ENCODE measurements at regions of chr2 and their contacts with region 1.

Region 1: GRCh38 chr2:53896864-53897263 is 37.1 kb upstream of the GPR75 start:
- DNase-seq: no peak
- ATAC-seq: peak; percentile 64 to 86 (median 81)
- H3K4me3 ChIP-seq: no peak overlapping the region
- H3K27ac ChIP-seq: peak overlapping the region in 1 of 12 donors; percentile 39
- H3K4me1 ChIP-seq: peaks cover 0 to 10% (median 0%) of the 10 kb centered on the region in 12 donors
- H3K27me3 ChIP-seq: no peaks in the 10 kb centered on the region
- CTCF ChIP-seq: no peak
- POLR2A ChIP-seq: no peak

Region 2: GRCh38 chr2:53933329-53933728 is 36.5 kb after region 1 on chr2:
- intact Hi-C with region 1: loop called in 1 of 10 experiments (anchors 5 kb)
- DNase-seq: no peak
- ATAC-seq: no peak
- H3K4me3 ChIP-seq: no peak overlapping the region
- H3K27ac ChIP-seq: no peak overlapping the region
- H3K4me1 ChIP-seq: no peaks in the 10 kb centered on the region
- H3K27me3 ChIP-seq: no peaks in the 10 kb centered on the region
- CTCF ChIP-seq: no peak
- POLR2A ChIP-seq: no peak

Region 3: DNA sequence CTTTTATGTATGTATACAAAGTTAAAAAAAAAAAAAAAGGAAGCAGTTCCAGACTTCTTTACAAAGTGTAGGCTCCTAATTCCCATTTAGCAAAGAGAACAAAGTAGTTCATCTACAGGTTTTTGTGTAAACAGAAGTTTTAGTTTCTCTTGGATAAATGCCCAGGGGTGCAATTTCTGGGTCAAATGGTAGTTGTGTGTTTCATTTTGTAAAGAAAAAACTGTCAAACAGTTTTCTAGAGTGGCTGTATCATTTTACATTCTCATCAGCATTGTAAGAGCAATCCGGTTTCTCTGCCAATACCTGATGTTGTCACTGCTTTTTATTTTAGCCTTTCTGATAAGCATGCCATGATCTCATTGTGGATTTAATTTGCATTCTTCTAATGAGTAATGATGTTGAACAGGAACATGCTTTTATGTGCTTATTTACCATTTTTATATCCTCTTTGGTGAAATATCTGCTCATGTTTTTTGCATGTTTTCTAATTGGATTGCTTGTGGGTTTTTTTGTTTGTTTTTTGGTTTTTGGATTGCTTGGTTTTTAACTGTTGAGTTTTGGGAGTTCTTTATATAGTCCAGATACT is 90.6 kb after region 1 on chr2:
- intact Hi-C with region 1: no loop called
- DNase-seq: no peak
- ATAC-seq: peak in 3 of 4 donors; percentile 58 to 72 (median 71)
- H3K4me3 ChIP-seq: no peak overlapping the region
- H3K27ac ChIP-seq: peak overlapping the region in 10 of 12 donors; percentile 22 to 83 (median 44)
- H3K4me1 ChIP-seq: peaks cover 0 to 41% (median 23%) of the 10 kb centered on the region in 12 donors
- H3K27me3 ChIP-seq: no peaks in the 10 kb centered on the region
- CTCF ChIP-seq: no peak
- POLR2A ChIP-seq: no peak

Measured in heart left ventricle (tissue), 16 donors.